Motor neuron (in vitro differentiated cells): ENCODE measurements at regions of chr3 and their contacts with region 1.

Region 1: DNA sequence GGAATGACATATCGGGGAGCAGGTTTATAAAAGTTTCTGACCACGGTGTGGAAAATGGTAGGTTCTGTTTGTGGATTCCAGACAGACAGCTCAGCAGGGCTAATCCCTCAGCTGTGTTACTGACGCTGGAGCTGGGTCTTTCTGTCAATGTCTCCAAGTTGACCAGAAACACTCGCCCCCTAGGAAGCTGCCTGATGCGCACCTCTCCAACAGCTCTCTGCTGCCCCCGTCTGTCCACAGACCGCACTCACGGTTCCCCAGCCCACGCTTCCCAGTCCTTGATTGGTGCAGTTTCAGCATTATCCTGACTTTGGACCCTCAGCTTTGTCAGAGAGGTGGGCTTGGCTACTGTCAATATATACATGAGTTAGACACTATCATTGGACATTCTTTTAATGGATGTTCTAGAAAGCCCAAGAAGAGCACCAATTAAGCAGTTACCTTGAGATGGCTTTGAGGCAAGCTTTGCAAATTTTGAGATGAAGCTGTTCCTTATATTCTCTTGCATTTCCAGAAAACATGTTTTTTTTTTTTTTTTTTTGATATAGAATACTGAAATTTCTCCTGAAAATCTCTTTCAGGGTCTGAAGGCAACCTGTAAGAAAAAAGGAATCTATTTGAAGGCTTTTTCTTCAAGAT is 98.9 kb upstream of the TBC1D5 start:
- ATAC-seq: peak; percentile 78 to 100 (median 84)
- H3K4me3 ChIP-seq: no peak overlapping the region
- H3K27ac ChIP-seq: no peak overlapping the region
- H3K4me1 ChIP-seq: no peaks in the 10 kb centered on the region

Region 2: GRCh38 chr3:17258823-17259436 is 582.4 kb before region 1 on chr3:
- in situ Hi-C with region 1: loop called in 1 of 9 experiments (anchors 25 kb)
- ATAC-seq: no peak
- H3K4me3 ChIP-seq: no peak overlapping the region
- H3K27ac ChIP-seq: no peak overlapping the region
- H3K4me1 ChIP-seq: peaks cover 0 to 16% of the 10 kb centered on the region in 2 donors